HCT116 (cell line): ENCODE measurements at regions of chr4 and their contacts with region 1.

Region 1: GRCh38 chr4:28799696-28800095 is 1920.5 kb upstream of the PCDH7 start:
- DNase-seq: no peak
- ATAC-seq: no peak
- H3K4me3 ChIP-seq: no peak overlapping the region
- H3K27ac ChIP-seq: no peak overlapping the region
- H3K4me1 ChIP-seq: no peaks in the 10 kb centered on the region
- H3K27me3 ChIP-seq: no peaks in the 10 kb centered on the region
- CTCF ChIP-seq: no peak
- POLR2A ChIP-seq: no peak
- RAD21 ChIP-seq: no peak

Region 2: DNA sequence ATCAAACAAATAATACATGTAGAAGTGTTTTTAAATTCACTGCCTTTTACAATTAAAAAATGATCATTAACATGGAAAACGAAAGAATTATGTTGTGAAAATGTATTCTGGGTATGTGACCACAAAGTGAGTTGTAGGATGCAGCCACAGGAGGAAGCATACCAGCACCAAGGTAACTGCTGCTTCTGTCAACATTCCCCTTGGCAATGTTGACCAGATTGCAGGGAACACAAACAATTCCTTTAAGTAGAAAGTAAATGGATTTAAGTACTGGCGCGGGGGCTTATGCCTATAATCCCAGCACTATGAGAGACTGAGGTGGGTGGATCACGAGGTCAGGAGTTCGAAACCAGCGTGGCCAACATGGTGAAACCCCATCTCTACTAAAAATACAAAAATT is 42.6 kb after region 1 on chr4:
- CTCF ChIA-PET with region 1: no interaction called
- POLR2A ChIA-PET with region 1: no interaction called
- RAD21 ChIA-PET with region 1: no interaction called
- intact Hi-C with region 1: loop called (anchors 1 kb)
- DNase-seq: no peak
- ATAC-seq: no peak
- H3K4me3 ChIP-seq: no peak overlapping the region
- H3K27ac ChIP-seq: no peak overlapping the region
- H3K4me1 ChIP-seq: no peaks in the 10 kb centered on the region
- H3K27me3 ChIP-seq: no peaks in the 10 kb centered on the region
- CTCF ChIP-seq: no peak
- POLR2A ChIP-seq: no peak
- RAD21 ChIP-seq: no peak